Aorta (tissue), 5 donors: ENCODE measurements at regions of chr16 and their contacts with region 1.

Region 1: DNA sequence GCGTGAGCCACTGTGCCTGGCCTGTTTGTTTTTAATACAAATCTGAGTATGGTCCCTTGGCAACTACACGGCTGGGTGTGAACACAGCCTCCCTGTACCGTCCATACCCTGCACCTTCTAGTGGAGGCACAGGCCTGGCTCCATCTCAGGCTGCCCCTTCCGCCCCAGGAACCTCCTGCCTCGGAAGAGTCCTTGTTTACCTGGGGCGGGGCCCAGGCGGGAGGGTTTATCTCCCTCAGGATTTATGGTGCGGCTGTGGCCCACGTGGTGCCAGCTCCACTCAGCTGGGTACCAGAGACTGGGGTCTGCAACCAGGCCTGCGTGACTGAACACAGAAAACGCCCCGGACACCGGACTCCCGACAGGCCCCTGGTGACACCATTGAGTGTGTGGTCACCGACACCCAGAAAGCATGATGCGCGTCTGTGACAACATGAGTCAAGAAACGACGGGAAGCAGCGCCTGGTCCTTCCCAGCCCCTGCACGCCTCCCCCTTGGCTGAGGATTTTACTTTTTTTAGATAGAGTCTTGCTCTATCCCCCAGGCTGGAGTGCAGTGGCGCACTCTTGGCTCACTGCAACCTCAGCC is 19.0 kb downstream of the UNKL start:
- DNase-seq: no peak
- ATAC-seq: no peak
- H3K4me3 ChIP-seq: no peak overlapping the region
- H3K27ac ChIP-seq: no peak overlapping the region
- H3K4me1 ChIP-seq: no peaks in the 10 kb centered on the region
- H3K27me3 ChIP-seq: no peaks in the 10 kb centered on the region

Region 2: DNA sequence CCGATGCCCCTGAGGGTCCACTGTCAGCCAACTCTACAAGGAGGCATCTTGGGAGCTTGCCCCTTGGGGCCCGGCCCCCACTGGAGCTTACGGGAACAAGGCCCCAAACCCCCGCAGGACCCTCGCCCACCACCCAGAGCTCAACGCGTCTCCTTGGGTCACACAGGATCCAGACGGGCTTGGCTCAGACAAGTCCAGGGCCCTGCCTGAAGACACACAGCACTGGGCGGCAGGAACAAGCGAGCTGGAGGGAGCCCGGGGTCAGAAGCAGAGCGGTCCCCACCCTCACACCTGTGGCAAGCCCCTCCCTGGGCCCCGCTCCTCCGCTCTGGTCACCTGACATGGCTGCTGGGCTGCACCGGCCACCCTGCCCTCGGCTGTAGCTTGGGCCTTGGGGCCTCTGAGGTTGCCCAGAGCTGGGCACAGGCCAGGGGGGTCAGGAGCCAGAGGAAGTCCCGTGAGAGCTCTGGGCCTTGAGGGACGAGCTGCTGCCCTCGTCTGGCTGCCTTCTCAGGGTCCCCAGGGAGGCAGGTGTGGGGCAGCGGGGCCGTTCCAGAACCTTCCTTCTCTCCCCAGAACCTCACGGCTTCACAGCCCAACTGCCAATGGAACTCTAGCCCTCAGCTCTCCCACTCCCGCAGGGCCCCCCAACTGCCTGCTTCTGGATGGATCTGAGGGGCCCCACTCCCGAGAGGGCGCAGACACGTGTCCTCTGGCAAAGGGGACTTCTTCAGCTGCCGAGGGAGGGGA is 48.6 kb after region 1 on chr16 and contains the start of gene CCDC154:
- intact Hi-C with region 1: loop called in 1 of 2 experiments (anchors 2 kb)
- DNase-seq: no peak
- ATAC-seq: no peak
- H3K4me3 ChIP-seq: no peak within 1 kb of the TSS
- H3K27ac ChIP-seq: no peak within 1 kb of the TSS
- H3K4me1 ChIP-seq: no peaks in the 10 kb centered on the region
- H3K27me3 ChIP-seq: no peaks in the 10 kb centered on the region
- total RNA-seq, gene CCDC154: 1.8 to 2.0 TPM